Activated CD4-positive, alpha-beta memory T cell treated with anti-CD3 and anti-CD28 coated beads for 36 hours (primary cell): ENCODE measurements at regions of chr11 and their contacts with region 1.

Region 1: GRCh38 chr11:36509694-36510566 is at the start of gene TRAF6:
- DNase-seq: peak; percentile 92
- H3K4me3 Mint-ChIP-seq: peak within 1 kb of the TSS; percentile 94
- H3K27ac Mint-ChIP-seq: peak within 1 kb of the TSS; percentile 86
- H3K4me1 Mint-ChIP-seq: peaks cover 27% of the 10 kb centered on the region
- H3K27me3 Mint-ChIP-seq: peaks cover 5% of the 10 kb centered on the region
- total RNA-seq, gene TRAF6: 12.0 to 12.1 TPM

Region 2: DNA sequence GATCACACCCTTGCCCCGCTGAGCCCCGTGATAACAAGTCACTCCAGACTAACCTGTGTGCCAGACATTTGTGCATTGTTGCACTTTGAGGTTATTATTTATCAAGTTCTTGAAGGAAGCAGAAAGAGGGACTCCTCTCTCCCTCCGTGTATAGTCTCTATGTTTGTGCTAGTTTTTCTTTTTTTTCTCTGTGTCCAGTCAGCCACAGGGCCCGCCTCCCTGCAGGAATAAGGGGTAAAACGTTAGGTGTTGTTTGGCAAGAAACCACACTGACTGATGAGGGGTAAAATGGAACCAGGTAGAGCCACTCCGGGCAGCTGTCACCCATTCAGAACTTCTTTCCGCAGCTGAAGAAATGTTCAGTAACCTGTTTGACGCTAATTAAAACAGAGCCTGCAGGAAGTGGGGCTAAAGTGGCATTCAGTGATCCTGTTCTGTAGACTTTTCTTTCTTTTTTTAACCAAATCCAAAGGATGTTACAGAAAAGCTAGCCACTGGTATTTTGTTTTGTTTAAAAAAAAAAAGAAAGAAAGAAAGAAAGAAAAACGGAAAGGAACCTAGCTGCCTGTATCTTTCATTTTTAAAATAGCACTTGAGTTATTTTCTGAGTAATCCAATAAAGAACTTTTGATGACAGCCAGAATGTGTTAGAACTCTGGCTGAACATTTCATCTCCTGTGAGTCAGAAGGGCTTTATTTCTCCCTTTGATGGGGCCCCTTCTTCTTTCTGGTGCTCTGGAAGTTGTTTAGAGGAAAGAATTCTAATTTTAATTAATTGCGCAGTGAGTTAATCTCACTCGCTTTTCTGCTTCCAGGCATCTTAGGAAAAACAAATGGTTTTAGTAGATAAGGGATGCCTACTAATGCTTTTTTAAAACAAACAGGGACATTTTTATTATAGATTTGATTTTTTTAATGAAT is 278.9 kb before region 1 on chr11:
- CTCF ChIA-PET with region 1: no interaction called
- POLR2A ChIA-PET with region 1: no interaction called
- intact Hi-C with region 1: no loop called
- DNase-seq: no peak
- H3K4me3 Mint-ChIP-seq: no peak overlapping the region
- H3K27ac Mint-ChIP-seq: no peak overlapping the region
- H3K4me1 Mint-ChIP-seq: no peaks in the 10 kb centered on the region
- H3K27me3 Mint-ChIP-seq: peaks cover 6% of the 10 kb centered on the region

Region 3: DNA sequence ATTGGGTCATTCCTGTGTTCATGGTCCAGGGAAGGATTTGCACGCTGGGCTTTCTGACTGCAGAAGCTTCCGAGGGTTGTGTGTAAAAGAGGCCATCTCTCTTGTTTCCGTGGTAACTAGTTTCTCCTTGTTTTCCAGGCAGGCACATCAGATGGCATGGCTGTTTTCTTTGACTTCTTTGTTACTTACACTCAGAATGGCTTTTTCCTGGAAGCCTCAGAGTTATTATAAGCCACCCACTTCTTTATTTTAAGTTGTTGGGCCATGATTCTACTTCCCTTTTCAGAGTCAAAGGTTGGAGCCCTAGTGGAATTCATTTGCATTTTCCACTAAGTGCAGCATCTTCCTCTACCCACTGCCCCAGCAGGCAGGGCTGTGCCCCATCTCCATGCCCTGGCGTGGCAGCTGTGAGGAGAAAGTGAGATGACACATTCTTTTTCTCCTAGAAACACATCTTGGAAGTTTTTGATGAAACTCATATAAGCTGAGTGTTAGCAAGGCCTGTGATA is 118.9 kb before region 1 on chr11:
- CTCF ChIA-PET with region 1: no interaction called
- POLR2A ChIA-PET with region 1: no interaction called
- intact Hi-C with region 1: no loop called
- DNase-seq: peak; percentile 68
- H3K4me3 Mint-ChIP-seq: peak overlapping the region; percentile 36
- H3K27ac Mint-ChIP-seq: peak overlapping the region; percentile 96
- H3K4me1 Mint-ChIP-seq: peaks cover 82% of the 10 kb centered on the region
- H3K27me3 Mint-ChIP-seq: no peaks in the 10 kb centered on the region

Region 4: DNA sequence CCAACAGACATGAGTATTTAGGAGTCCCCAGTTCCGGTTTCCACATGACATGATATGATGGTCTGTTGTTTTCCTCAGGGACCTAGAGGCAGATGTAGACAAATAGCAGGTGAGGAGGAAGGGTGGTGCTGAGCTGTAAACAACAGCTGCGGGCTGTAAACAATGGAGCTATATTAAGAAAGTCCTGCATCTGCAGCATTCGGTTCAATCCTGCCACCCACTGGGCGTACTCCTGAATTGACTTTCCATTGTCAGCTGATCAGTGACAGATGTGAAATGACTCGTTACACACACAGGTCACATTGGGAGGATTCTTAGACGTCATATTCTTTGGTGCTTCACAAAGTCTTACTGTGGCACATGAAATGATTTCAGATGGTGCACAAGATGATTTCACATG is 31.1 kb after region 1 on chr11:
- CTCF ChIA-PET with region 1: interaction called, 3 read pairs
- POLR2A ChIA-PET with region 1: no interaction called
- intact Hi-C with region 1: loop called (anchors 2 kb)
- DNase-seq: peak; percentile 59
- H3K4me3 Mint-ChIP-seq: no peak overlapping the region
- H3K27ac Mint-ChIP-seq: no peak overlapping the region
- H3K4me1 Mint-ChIP-seq: no peaks in the 10 kb centered on the region
- H3K27me3 Mint-ChIP-seq: peaks cover 16% of the 10 kb centered on the region